Activated naive CD4-positive, alpha-beta T cell treated with anti-CD3 and anti-CD28 coated beads for 36 hours (primary cell): ENCODE measurements at regions of chr11 and their contacts with region 1.

Region 1: DNA sequence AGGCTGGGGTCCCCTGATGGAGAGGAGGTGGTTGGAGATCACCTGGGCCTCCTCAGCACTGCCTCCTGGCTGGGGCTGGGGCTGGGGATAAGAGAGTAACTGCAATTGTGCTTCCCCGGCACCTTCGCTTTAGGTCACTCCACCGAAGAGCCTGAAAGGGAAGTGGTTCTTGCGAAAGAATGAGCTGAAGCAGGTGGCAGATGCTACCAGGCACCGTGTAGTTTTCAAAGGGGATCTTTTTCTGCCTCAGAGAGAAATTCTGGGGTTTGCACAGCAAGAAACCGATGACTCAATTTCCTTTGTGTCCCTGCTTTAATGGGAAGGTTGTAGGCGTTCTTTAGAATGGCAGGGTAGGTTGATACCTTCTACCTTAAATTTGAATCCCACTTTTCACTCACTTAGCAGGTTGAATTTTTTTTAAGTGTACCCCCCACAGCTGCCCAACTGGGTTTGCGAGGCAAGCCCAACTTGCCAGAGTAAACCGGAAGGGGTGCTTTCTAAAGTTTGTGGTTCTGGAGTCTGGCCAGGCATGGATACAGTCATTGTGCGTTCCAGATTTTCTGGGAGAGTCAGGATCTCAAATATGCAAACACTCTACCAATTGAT is 5.3 kb downstream of the CD44 start:
- DNase-seq: peak; percentile 87
- H3K4me3 Mint-ChIP-seq: peak overlapping the region; percentile 55
- H3K27ac Mint-ChIP-seq: peak overlapping the region; percentile 96
- H3K4me1 Mint-ChIP-seq: peaks cover 68% of the 10 kb centered on the region
- H3K27me3 Mint-ChIP-seq: no peaks in the 10 kb centered on the region

Region 2: DNA sequence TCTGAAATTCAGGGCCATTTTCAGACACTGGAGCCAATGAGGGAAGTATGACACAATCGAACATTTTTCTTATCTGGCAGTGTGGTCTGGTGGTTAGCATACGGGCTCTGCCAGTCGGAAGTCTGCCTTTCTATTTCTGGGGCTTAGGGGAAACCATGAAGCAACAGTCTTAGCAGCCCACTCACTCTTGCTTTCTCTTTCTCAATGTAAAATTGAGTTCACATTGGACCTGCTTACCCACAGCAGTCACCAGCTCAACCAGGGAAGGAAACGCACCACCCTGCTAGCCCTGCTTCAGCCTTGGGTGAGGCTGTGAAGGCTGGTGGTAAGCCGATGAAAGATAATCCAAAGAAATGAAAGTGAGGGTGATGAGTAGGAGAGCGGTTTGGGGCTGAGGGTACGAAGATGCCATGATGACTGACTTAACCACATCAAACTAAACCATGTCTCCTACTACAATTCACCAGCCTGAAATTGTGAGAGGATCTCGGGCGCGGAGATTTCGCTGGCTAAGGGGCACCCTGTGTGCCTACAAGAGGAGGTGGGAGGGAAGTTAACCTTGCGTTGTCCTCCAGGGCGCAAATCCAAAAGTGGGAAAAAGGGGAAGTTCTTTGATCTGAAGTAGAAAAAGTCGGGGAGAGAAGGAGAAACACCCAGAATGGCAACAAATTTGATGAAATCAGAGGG is 1250.4 kb before region 1 on chr11:
- CTCF ChIA-PET with region 1: no interaction called
- intact Hi-C with region 1: loop called (anchors 10 kb)
- DNase-seq: peak; percentile 87
- H3K4me3 Mint-ChIP-seq: peak overlapping the region; percentile 57
- H3K27ac Mint-ChIP-seq: peak overlapping the region; percentile 33
- H3K4me1 Mint-ChIP-seq: peaks cover 47% of the 10 kb centered on the region
- H3K27me3 Mint-ChIP-seq: peaks cover 47% of the 10 kb centered on the region

Region 3: DNA sequence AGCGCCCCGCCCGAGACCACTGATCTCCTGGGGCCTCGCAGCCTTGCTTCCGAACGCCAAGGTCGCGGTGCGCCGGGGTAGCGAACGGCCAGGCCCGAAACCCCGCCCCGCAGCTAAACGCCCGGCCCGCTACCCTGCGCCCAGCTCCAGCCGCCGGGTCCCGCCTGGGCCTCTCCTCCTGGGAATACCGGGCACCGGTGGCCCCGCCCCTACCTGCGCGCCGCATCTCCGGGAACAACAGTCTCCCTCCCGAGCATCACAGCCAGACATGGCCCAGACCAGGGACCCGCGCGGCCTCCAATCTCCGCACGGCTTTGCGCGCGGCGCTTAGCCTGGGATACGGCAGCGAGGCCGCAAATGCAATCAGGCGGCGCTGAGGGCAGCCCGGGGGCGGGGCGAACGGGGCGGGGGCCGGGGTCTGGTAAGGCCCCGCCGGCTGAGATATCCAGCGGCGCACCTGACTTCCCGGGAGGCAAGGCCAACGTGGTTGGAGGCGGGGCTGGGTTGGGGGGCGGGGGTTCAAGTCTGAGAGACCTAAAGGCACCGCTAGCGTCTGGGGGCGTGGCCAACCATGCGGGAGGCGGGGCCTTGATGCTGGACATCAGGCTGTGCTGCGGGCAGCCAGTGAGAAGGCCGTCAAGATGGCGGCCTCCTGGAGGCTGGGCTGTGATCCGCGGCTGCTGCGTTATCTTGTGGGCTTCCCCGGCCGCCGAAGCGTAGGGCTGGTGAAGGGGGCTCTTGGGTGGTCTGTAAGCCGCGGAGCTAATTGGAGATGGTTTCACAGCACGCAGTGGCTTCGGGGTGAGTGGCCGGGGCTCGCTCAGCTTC is 228.0 kb before region 1 on chr11 and contains the starts of genes APIP and PDHX:
- CTCF ChIA-PET with region 1: no interaction called
- intact Hi-C with region 1: loop called (anchors 1 kb)
- DNase-seq: peak; percentile 98
- H3K4me3 Mint-ChIP-seq: peak within 1 kb of the TSS; percentile 99
- H3K27ac Mint-ChIP-seq: peak within 1 kb of the TSS; percentile 96
- H3K4me1 Mint-ChIP-seq: peaks cover 44% of the 10 kb centered on the region
- H3K27me3 Mint-ChIP-seq: no peaks in the 10 kb centered on the region
- total RNA-seq, gene APIP: 42.4 to 42.5 TPM
- total RNA-seq, gene PDHX: 38.2 to 40.9 TPM

Region 4: GRCh38 chr11:35030716-35031213 is 113.5 kb before region 1 on chr11:
- CTCF ChIA-PET with region 1: interaction called, 3 read pairs
- intact Hi-C with region 1: loop called (anchors 1 kb)
- DNase-seq: peak; percentile 55
- H3K4me3 Mint-ChIP-seq: peak overlapping the region; percentile 59
- H3K27ac Mint-ChIP-seq: peak overlapping the region; percentile 93
- H3K4me1 Mint-ChIP-seq: peaks cover 44% of the 10 kb centered on the region
- H3K27me3 Mint-ChIP-seq: no peaks in the 10 kb centered on the region

Region 5: DNA sequence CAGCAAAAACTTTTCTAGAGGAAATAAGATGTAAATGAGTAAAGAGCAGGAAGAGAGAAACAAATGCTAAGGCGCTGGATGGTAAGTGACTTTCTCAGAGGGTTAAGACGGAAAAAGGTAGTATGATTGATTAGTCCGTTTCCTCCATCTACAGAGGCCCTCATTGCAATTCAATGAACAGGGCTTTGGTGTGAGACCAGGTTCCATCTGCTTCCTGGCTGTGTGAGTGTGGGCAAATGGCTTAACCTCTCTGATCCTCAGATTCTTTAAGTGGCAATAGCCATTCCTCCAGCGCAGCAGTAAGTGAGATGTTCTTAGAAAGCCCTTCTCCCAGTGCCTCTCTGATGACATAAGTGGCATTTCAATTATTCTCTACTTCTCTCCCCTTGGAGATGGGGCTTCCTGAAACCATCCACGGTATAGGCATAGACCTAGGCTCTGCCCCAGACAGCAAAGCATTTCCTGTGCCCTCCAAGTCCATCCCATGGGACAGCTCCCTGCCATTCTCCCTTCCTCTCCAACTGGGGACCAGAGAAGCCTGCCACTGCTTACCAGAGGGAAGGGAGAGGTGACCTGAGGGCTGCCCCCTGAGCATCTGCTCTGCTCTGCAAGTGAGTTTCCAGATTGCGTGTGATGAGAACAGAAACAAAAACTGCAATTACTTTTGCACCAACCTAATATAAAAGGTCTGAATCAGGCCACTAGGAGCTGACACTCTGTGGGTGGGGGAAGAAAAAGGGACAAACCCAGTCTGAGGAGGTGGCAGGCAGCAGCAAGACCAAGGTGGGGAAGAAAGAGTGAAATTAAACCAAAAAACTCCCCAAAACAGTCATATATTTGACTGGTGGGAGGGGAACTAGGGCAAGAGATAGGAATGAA is 18.0 kb before region 1 on chr11:
- CTCF ChIA-PET with region 1: interaction called, 8 read pairs
- intact Hi-C with region 1: loop called (anchors 1 kb)
- DNase-seq: peak; percentile 81
- H3K4me3 Mint-ChIP-seq: peak overlapping the region; percentile 54
- H3K27ac Mint-ChIP-seq: peak overlapping the region; percentile 91
- H3K4me1 Mint-ChIP-seq: peaks cover 65% of the 10 kb centered on the region
- H3K27me3 Mint-ChIP-seq: no peaks in the 10 kb centered on the region

Region 6: GRCh38 chr11:35214792-35215193 is 70.6 kb after region 1 on chr11:
- CTCF ChIA-PET with region 1: interaction called, 3 read pairs
- intact Hi-C with region 1: loop called (anchors 1 kb)
- DNase-seq: peak; percentile 77
- H3K4me3 Mint-ChIP-seq: no peak overlapping the region
- H3K27ac Mint-ChIP-seq: peak overlapping the region; percentile 78
- H3K4me1 Mint-ChIP-seq: peaks cover 62% of the 10 kb centered on the region
- H3K27me3 Mint-ChIP-seq: no peaks in the 10 kb centered on the region

Region 7: GRCh38 chr11:35343033-35343598 is 198.9 kb after region 1 on chr11:
- CTCF ChIA-PET with region 1: no interaction called
- intact Hi-C with region 1: loop called (anchors 1 kb)
- DNase-seq: peak; percentile 58
- H3K4me3 Mint-ChIP-seq: peak overlapping the region; percentile 31
- H3K27ac Mint-ChIP-seq: peak overlapping the region; percentile 69
- H3K4me1 Mint-ChIP-seq: peaks cover 52% of the 10 kb centered on the region
- H3K27me3 Mint-ChIP-seq: no peaks in the 10 kb centered on the region